ENCODE measurements at regions of chr9 and their contacts with region 1.

Region 1: DNA sequence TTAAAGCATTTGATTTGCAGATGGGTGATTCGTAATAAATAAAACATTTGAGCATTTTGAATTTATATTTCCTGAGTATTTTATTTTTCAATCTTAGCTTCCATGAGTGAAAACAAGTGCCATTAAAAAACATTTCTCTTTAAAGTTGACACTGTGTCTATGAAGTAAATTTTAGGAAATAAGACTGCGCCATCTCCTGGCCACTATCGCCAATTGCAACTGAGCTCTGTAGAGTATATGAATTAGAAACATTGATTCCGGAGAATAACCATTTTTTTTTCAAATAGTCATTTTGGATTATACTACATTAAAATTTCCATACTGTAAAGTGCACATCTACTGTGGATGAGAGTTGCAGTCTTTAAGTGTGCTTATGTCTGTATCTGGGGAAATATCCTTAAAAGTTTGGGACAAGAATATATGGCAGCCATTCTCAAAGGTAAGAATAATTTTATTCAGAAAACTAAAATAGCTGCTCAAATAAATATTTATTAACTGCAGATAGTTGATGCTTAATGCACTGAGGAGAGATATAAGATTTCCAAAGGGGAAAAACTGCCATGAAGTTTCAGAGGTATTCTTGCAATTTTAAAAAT is 5.9 kb downstream of the DMRTA1 start:
- DNase-seq: peak; percentile 29
- H3K4me3 ChIP-seq: no peak overlapping the region
- H3K27ac ChIP-seq: no peak overlapping the region
- H3K4me1 ChIP-seq: peaks cover 2% of the 10 kb centered on the region
- H3K27me3 ChIP-seq: no peaks in the 10 kb centered on the region
- CTCF ChIP-seq: peak; percentile 42 to 86 (median 82)
- POLR2A ChIP-seq: no peak

Region 2: GRCh38 chr9:22244141-22245011 is 208.1 kb before region 1 on chr9:
- intact Hi-C with region 1: loop called (anchors 5 kb)
- DNase-seq: no peak
- H3K4me3 ChIP-seq: no peak overlapping the region
- H3K27ac ChIP-seq: no peak overlapping the region
- H3K4me1 ChIP-seq: no peaks in the 10 kb centered on the region
- H3K27me3 ChIP-seq: no peaks in the 10 kb centered on the region
- CTCF ChIP-seq: peak in 3 of 4 experiments; percentile 14 to 40 (median 34)
- POLR2A ChIP-seq: no peak

Region 3: GRCh38 chr9:22307013-22307711 is 145.4 kb before region 1 on chr9:
- intact Hi-C with region 1: loop called (anchors 5 kb)
- DNase-seq: peak; percentile 37
- H3K4me3 ChIP-seq: no peak overlapping the region
- H3K27ac ChIP-seq: no peak overlapping the region
- H3K4me1 ChIP-seq: no peaks in the 10 kb centered on the region
- H3K27me3 ChIP-seq: no peaks in the 10 kb centered on the region
- CTCF ChIP-seq: peak; percentile 24 to 65 (median 50)
- POLR2A ChIP-seq: no peak

Region 4: GRCh38 chr9:22363421-22363887 is 89.1 kb before region 1 on chr9:
- intact Hi-C with region 1: no loop called
- DNase-seq: no peak
- H3K4me3 ChIP-seq: no peak overlapping the region
- H3K27ac ChIP-seq: no peak overlapping the region
- H3K4me1 ChIP-seq: no peaks in the 10 kb centered on the region
- H3K27me3 ChIP-seq: no peaks in the 10 kb centered on the region
- CTCF ChIP-seq: no peak
- POLR2A ChIP-seq: no peak